B cell (primary cell): ENCODE measurements at regions of chr14 and their contacts with region 1.

Region 1: DNA sequence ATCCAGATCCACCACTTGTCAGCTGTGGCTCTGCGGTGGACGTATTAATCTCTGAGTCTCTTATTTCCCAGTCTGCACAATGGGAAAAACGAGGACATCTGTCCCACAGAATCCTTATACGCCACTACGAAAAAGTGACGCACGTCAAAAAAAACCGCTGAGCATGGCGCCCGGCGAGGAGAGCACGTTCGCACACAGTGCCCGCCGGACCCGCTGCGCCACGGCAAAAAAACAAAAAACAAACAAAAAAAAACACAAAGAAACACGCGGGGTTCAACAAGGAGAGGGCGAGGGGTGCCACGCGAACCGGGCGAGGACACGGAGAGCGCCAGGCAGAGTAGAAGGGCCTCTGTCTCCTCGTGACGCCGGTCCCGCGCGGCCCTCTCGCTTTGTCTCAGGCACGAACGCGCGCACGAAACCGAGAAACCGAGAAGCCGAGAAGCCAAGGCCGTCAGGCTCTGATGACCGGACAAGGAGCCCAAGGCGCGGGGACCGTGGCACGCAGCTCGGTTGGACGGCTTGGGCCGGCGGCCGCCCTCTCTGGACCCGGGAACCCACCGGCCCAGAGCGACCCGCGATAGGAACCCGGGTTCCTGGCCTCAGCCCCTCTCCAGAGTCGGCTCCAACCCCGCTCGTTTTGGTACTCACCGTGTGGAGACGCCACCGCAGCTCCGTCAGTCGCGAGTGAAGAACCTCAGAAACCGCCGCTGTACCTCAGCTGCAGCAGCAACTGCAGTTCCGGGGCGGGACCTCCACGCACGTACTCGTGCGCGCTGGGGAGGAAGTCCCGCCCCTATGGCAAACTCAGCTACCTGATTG is at the start of gene DDX24:
- DNase-seq: peak; percentile 97
- ATAC-seq: peak; percentile 97
- H3K4me3 ChIP-seq: peak within 1 kb of the TSS; percentile 91 to 99 (median 97)
- H3K4me3 Mint-ChIP-seq: peak within 1 kb of the TSS; percentile 97
- H3K27ac ChIP-seq: peak within 1 kb of the TSS; percentile 83 to 93
- H3K27ac Mint-ChIP-seq: peak within 1 kb of the TSS; percentile 97
- H3K4me1 ChIP-seq: peaks cover 36 to 45% of the 10 kb centered on the region in 2 donors
- H3K4me1 Mint-ChIP-seq: peaks cover 46% of the 10 kb centered on the region
- H3K27me3 ChIP-seq: no peaks in the 10 kb centered on the region
- H3K27me3 Mint-ChIP-seq: no peaks in the 10 kb centered on the region
- CTCF ChIP-seq: no peak
- total RNA-seq, gene DDX24: 191 and 211 TPM in 2 replicates

Region 2: GRCh38 chr14:93970549-93970946 is 110.1 kb before region 1 on chr14:
- CTCF ChIA-PET with region 1: no interaction called
- POLR2A ChIA-PET with region 1: no interaction called
- intact Hi-C with region 1: loop called (anchors 1 kb)
- DNase-seq: peak; percentile 77
- ATAC-seq: peak; percentile 58
- H3K4me3 ChIP-seq: peak overlapping the region; percentile 30 to 78 (median 70)
- H3K4me3 Mint-ChIP-seq: peak overlapping the region; percentile 93
- H3K27ac ChIP-seq: peak overlapping the region; percentile 31 to 44
- H3K27ac Mint-ChIP-seq: peak overlapping the region; percentile 86
- H3K4me1 ChIP-seq: peaks cover 60 to 62% of the 10 kb centered on the region in 2 donors
- H3K4me1 Mint-ChIP-seq: peaks cover 64% of the 10 kb centered on the region
- H3K27me3 ChIP-seq: peaks cover 0 to 19% (median 9%) of the 10 kb centered on the region in 4 experiments
- H3K27me3 Mint-ChIP-seq: peaks cover 15% of the 10 kb centered on the region
- CTCF ChIP-seq: peak; percentile 78

Region 3: GRCh38 chr14:94026173-94026888 is 54.3 kb before region 1 on chr14 and contains the start of gene OTUB2:
- CTCF ChIA-PET with region 1: interaction called, 3 read pairs
- POLR2A ChIA-PET with region 1: no interaction called
- intact Hi-C with region 1: loop called (anchors 1 kb)
- DNase-seq: peak; percentile 98
- ATAC-seq: peak; percentile 100
- H3K4me3 ChIP-seq: peak within 1 kb of the TSS in 4 of 5 experiments; percentile 38 to 64 (median 58)
- H3K4me3 Mint-ChIP-seq: peak within 1 kb of the TSS; percentile 90
- H3K27ac ChIP-seq: no peak within 1 kb of the TSS
- H3K27ac Mint-ChIP-seq: peak within 1 kb of the TSS; percentile 70
- H3K4me1 ChIP-seq: peaks cover 9% of the 10 kb centered on the region in 2 donors
- H3K4me1 Mint-ChIP-seq: peaks cover 8% of the 10 kb centered on the region
- H3K27me3 ChIP-seq: peaks cover 0 to 22% (median 9%) of the 10 kb centered on the region in 4 experiments
- H3K27me3 Mint-ChIP-seq: peaks cover 22% of the 10 kb centered on the region
- CTCF ChIP-seq: no peak
- total RNA-seq, gene OTUB2: 0.17 and 0.19 TPM in 2 replicates

Region 4: GRCh38 chr14:94173885-94174603 is 93.4 kb after region 1 on chr14 and contains the start of gene PPP4R4:
- CTCF ChIA-PET with region 1: no interaction called
- POLR2A ChIA-PET with region 1: interaction called, 5 read pairs
- intact Hi-C with region 1: loop called (anchors 2 kb)
- DNase-seq: peak; percentile 82
- ATAC-seq: peak; percentile 92
- H3K4me3 ChIP-seq: peak within 1 kb of the TSS in 4 of 5 experiments; percentile 46 to 66 (median 61)
- H3K4me3 Mint-ChIP-seq: peak within 1 kb of the TSS; percentile 88
- H3K27ac ChIP-seq: no peak within 1 kb of the TSS
- H3K27ac Mint-ChIP-seq: peak within 1 kb of the TSS; percentile 50
- H3K4me1 ChIP-seq: peaks cover 17 to 19% of the 10 kb centered on the region in 2 donors
- H3K4me1 Mint-ChIP-seq: peaks cover 15% of the 10 kb centered on the region
- H3K27me3 ChIP-seq: peaks cover 0 to 49% (median 35%) of the 10 kb centered on the region in 4 experiments
- H3K27me3 Mint-ChIP-seq: peaks cover 50% of the 10 kb centered on the region
- CTCF ChIP-seq: no peak
- total RNA-seq, gene PPP4R4: not detected in 2 replicates